H1 (cell line): ENCODE measurements at regions of chr17 and their contacts with region 1.

Region 1: GRCh38 chr17:4789901-4790704 is 1.3 kb downstream of the GLTPD2 start:
- DNase-seq: peak in 1 of 2 experiments; percentile 81
- H3K4me3 ChIP-seq: peak overlapping the region; percentile 46 to 74 (median 66)
- H3K27ac ChIP-seq: no peak overlapping the region
- H3K4me1 ChIP-seq: peaks cover 0 to 15% (median 8%) of the 10 kb centered on the region in 4 experiments; a peak in 5 of 7 replicates
- H3K27me3 ChIP-seq: peaks cover 3 to 30% (median 17%) of the 10 kb centered on the region in 4 experiments
- CTCF ChIP-seq: peak; percentile 57 to 75 (median 73)
- EP300 ChIP-seq: no peak
- POLR2A ChIP-seq: no peak
- RAD21 ChIP-seq: peak in 1 of 2 experiments; percentile 8; a peak in 2 of 4 replicates

Region 2: GRCh38 chr17:4594931-4595684 is 195.0 kb before region 1 on chr17:
- CTCF ChIA-PET with region 1: no interaction called
- POLR2A ChIA-PET with region 1: no interaction called
- DNase-seq: peak in 1 of 2 experiments; percentile 79
- H3K4me3 ChIP-seq: no peak overlapping the region
- H3K27ac ChIP-seq: no peak overlapping the region
- H3K4me1 ChIP-seq: peaks cover under 1 to 25% (median 15%) of the 10 kb centered on the region in 4 experiments
- H3K27me3 ChIP-seq: no peaks in the 10 kb centered on the region
- CTCF ChIP-seq: peak; percentile 57 to 76 (median 69)
- EP300 ChIP-seq: no peak
- POLR2A ChIP-seq: no peak
- RAD21 ChIP-seq: peak; percentile 35 to 51; a peak in 3 of 4 replicates

Region 3: DNA sequence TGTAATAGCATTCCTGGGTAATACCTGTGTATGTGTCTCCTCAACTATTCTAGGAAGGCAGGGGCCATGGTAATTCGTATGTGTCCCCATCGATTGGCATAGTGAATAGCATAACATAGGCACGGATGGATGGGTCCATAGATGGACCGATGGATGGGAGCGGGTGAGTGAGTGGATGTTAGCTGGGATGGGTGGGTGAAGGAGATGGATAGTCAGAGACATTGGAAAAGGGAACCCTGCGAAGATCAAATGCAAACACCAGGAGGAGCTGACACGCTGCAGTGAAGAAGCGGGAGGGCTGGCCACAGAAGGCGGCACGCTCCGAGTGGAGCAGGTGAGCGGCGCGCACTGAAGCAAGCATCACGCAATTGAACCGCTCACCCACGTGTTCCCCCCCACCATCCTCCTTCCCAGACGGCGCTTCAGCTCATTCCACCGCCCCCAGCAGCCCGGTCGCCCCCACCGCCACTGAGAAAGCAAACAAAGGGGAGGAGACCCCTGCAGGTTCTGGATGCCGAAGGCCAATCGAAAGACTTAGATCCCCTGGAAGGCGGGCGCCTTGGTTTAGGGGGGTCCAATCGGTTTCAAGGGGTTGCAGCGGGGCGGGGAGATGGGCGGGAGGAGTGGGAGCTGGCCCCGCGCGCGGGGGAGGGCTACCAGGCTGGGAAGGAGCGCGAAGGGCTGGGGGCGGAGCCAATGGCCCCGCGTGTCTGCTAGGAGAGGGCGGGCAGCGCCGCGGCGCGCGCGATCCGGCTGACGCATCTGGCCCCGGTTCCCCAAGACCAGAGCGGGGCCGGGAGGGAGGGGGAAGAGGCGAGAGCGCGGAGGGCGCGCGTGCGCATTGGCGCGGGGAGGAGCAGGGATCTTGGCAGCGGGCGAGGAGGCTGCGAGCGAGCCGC is 80.1 kb before region 1 on chr17 and contains the start of gene ARRB2:
- CTCF ChIA-PET with region 1: interaction called, 4 read pairs
- POLR2A ChIA-PET with region 1: interaction called, 14 read pairs
- DNase-seq: peak; percentile 90 to 95
- H3K4me3 ChIP-seq: peak within 1 kb of the TSS; percentile 64 to 81 (median 70)
- H3K27ac ChIP-seq: peak within 1 kb of the TSS; percentile 50; the same call in 1 of the 2 replicates
- H3K4me1 ChIP-seq: peaks cover 6 to 15% (median 10%) of the 10 kb centered on the region in 4 experiments
- H3K27me3 ChIP-seq: no peaks in the 10 kb centered on the region
- CTCF ChIP-seq: peak; percentile 34 to 58 (median 41); a peak in 3 of 4 replicates
- EP300 ChIP-seq: no peak
- POLR2A ChIP-seq: peak in 1 of 2 experiments; percentile 48; a peak in 1 of 3 replicates
- RAD21 ChIP-seq: peak; percentile 31 to 56; a peak in 3 of 4 replicates
- total RNA-seq, gene ARRB2: 95.6 and 101 TPM in 2 replicates

Region 4: DNA sequence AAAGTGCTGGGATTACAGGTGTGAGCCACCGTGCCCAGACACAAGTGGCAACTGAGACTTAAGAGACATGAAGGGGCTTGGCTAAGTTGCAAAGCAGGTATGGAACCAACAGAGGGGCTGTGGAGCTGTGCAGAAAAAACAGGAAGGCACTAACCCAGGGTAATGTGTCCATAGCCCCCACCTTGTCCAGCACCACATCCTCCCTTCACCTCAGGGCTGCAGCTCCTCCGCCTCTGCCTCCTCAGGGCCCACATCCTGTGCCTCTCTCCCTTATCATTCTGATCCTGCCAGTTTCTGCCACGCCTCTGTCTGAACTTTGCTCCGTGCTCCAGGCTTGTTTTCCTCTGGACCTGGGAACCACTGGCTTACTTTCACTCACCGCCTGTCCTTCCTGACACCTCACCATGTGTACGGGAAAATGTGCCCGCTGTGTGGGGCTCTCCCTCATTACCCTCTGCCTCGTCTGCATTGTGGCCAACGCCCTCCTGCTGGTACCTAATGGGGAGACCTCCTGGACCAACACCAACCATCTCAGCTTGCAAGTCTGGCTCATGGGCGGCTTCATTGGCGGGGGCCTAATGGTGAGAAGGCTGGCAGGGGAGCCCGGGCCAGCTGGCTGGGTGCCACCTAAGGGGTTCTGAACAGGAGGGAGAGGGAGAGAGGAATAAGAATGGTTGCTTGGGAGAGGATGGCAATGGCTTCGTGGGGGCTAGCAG is 18.4 kb before region 1 on chr17 and contains the start of gene TM4SF5:
- CTCF ChIA-PET with region 1: interaction called, 16 read pairs
- POLR2A ChIA-PET with region 1: interaction called, 5 read pairs
- DNase-seq: no peak
- H3K4me3 ChIP-seq: no peak within 1 kb of the TSS
- H3K27ac ChIP-seq: no peak within 1 kb of the TSS
- H3K4me1 ChIP-seq: no peaks in the 10 kb centered on the region
- H3K27me3 ChIP-seq: no peaks in the 10 kb centered on the region
- CTCF ChIP-seq: no peak
- EP300 ChIP-seq: no peak
- POLR2A ChIP-seq: no peak
- RAD21 ChIP-seq: no peak
- total RNA-seq, gene TM4SF5: not detected in 2 replicates

Region 5: GRCh38 chr17:4777969-4778761 is 11.9 kb before region 1 on chr17:
- CTCF ChIA-PET with region 1: interaction called, 16 read pairs
- POLR2A ChIA-PET with region 1: interaction called, 3 read pairs
- DNase-seq: no peak
- H3K4me3 ChIP-seq: no peak overlapping the region
- H3K27ac ChIP-seq: no peak overlapping the region
- H3K4me1 ChIP-seq: no peaks in the 10 kb centered on the region
- H3K27me3 ChIP-seq: 0 out of 7 replicates have a peak, but pooled peaks cover 0 to 2% (median 0%) of the 10 kb centered on the region in 4 experiments
- CTCF ChIP-seq: no peak
- EP300 ChIP-seq: no peak
- POLR2A ChIP-seq: no peak
- RAD21 ChIP-seq: no peak

Region 6: GRCh38 chr17:4806777-4807604 is 16.9 kb after region 1 on chr17 and contains the start of gene PLD2:
- CTCF ChIA-PET with region 1: interaction called, 5 read pairs
- POLR2A ChIA-PET with region 1: interaction called, 15 read pairs
- DNase-seq: peak in 1 of 2 experiments; percentile 89
- H3K4me3 ChIP-seq: peak within 1 kb of the TSS; percentile 68 to 97 (median 79)
- H3K27ac ChIP-seq: no peak within 1 kb of the TSS; the same call in 1 of the 2 replicates
- H3K4me1 ChIP-seq: peaks cover 0 to 5% (median 4%) of the 10 kb centered on the region in 4 experiments; a peak in 3 of 7 replicates
- H3K27me3 ChIP-seq: no peaks in the 10 kb centered on the region; a peak in 1 of 7 replicates
- CTCF ChIP-seq: no peak
- EP300 ChIP-seq: no peak
- POLR2A ChIP-seq: peak in 1 of 2 experiments; percentile 70; a peak in 2 of 3 replicates
- RAD21 ChIP-seq: no peak
- total RNA-seq, gene PLD2: 48.4 and 53.0 TPM in 2 replicates